CD4-positive, alpha-beta T cell (primary cell): ENCODE measurements at regions of chr10 and their contacts with region 1.

Region 1: GRCh38 chr10:100508691-100509150 is 10.9 kb downstream of the SEC31B start:
- DNase-seq: peak in 10 of 14 experiments; percentile 5 to 84 (median 39)
- ATAC-seq: peak; percentile 47
- H3K4me3 ChIP-seq: peak overlapping the region; percentile 2
- H3K4me3 Mint-ChIP-seq: peak overlapping the region; percentile 61
- H3K27ac ChIP-seq: peak overlapping the region in 1 of 2 donors; percentile 36
- H3K27ac Mint-ChIP-seq: peak overlapping the region; percentile 85
- H3K4me1 ChIP-seq: peaks cover 48% of the 10 kb centered on the region
- H3K4me1 Mint-ChIP-seq: peaks cover 53% of the 10 kb centered on the region
- H3K27me3 ChIP-seq: no peaks in the 10 kb centered on the region
- H3K27me3 Mint-ChIP-seq: no peaks in the 10 kb centered on the region
- CTCF ChIP-seq: peak; percentile 64

Region 2: GRCh38 chr10:99845837-99846382 is 662.8 kb before region 1 on chr10:
- CTCF ChIA-PET with region 1: no interaction called
- POLR2A ChIA-PET with region 1: no interaction called
- intact Hi-C with region 1: loop called in 1 of 2 experiments (anchors 10 kb)
- DNase-seq: peak; percentile 41 to 88 (median 58)
- ATAC-seq: peak; percentile 81
- H3K4me3 ChIP-seq: peak overlapping the region; percentile 13
- H3K4me3 Mint-ChIP-seq: no peak overlapping the region
- H3K27ac ChIP-seq: no peak overlapping the region
- H3K27ac Mint-ChIP-seq: no peak overlapping the region
- H3K4me1 ChIP-seq: peaks cover 6% of the 10 kb centered on the region
- H3K4me1 Mint-ChIP-seq: peaks cover 5% of the 10 kb centered on the region
- H3K27me3 ChIP-seq: peaks cover 0 to 8% of the 10 kb centered on the region in 2 experiments
- H3K27me3 Mint-ChIP-seq: no peaks in the 10 kb centered on the region
- CTCF ChIP-seq: peak; percentile 92

Region 3: DNA sequence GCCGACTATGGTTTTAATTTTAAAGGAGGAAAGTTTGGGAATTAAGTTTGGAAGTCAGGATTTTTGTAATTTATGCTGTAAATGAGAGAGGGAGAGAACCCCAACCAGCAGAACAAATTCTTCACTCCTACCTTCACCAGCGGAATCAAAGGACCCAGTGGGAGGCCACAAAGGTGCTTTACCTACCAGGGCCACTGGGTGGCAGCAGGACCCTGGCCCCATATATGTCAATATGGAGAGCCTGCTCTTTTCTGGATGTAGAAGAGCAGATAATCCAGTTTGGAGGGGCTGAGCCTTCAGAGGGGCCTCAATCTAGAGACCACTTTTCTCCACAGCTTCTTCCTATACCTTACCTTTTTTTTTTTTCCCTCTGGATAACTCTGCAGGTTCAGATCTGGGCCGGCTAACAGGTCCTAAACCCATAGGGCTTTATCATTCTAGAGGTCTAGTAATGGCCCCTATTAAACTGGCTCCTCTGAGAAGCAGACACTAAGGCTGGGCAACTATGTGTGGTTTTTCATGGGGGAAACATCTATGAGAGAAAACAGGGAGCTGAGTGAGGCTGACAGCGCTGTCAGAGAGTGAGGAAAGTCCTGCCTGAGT is 170.2 kb before region 1 on chr10:
- CTCF ChIA-PET with region 1: interaction called, 5 read pairs
- POLR2A ChIA-PET with region 1: interaction called, 3 read pairs
- intact Hi-C with region 1: loop called (anchors 1 to 2 kb)
- DNase-seq: peak; percentile 66 to 85 (median 76)
- ATAC-seq: peak; percentile 94
- H3K4me3 ChIP-seq: no peak overlapping the region
- H3K4me3 Mint-ChIP-seq: no peak overlapping the region
- H3K27ac ChIP-seq: no peak overlapping the region
- H3K27ac Mint-ChIP-seq: no peak overlapping the region
- H3K4me1 ChIP-seq: no peaks in the 10 kb centered on the region
- H3K4me1 Mint-ChIP-seq: no peaks in the 10 kb centered on the region
- H3K27me3 ChIP-seq: no peaks in the 10 kb centered on the region
- H3K27me3 Mint-ChIP-seq: peaks cover 4% of the 10 kb centered on the region
- CTCF ChIP-seq: peak; percentile 87

Region 4: DNA sequence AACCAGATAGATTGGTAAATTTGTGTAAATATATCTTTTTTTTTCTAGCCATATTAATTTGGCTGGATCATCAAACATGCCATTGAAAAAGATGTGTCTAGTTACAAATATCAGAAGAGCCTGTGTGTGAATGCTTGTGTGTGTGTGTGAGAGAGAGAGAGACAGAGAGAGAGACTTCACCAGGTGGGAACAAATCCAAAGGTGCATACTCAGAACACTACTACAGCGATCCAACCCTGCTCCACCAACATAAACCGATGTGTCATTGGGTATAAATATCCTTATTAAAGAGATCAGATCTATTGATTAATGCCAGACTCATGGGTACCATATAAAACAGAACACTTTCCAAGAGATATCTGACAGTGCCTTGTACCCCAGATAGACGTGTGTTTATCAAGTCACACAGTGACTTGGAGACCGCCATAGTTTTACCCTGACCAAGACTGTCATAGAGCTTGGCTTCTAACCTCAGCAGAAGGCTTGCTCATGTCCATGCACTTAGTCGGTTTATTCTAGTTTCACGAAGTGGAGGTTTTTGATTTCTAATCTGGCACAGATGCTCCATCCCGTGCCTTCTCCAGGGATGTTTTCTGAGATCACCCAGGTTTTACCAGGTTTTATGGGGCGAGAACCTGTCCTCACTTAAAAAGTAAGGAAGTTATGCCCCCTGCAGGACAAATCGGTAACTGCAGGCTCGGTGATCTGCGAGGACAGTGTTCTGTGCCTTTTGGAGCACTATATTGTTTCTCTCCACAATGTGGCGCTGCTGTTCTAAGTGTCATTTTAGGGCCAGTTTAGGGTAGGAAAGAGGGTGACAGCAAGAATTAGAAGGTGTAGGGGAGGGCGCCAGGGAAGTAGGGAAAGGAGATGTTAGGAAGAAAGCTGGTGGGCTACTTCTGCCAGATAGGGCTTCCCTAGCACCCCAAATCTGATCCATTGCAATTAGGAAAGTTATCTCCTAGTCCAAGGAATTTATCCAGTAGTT is 75.2 kb before region 1 on chr10:
- CTCF ChIA-PET with region 1: interaction called, 15 read pairs
- POLR2A ChIA-PET with region 1: no interaction called
- intact Hi-C with region 1: loop called (anchors 1 to 2 kb)
- DNase-seq: peak; percentile 88 to 99 (median 94)
- ATAC-seq: peak; percentile 99
- H3K4me3 ChIP-seq: no peak overlapping the region
- H3K4me3 Mint-ChIP-seq: no peak overlapping the region
- H3K27ac ChIP-seq: no peak overlapping the region
- H3K27ac Mint-ChIP-seq: no peak overlapping the region
- H3K4me1 ChIP-seq: peaks cover 5% of the 10 kb centered on the region
- H3K4me1 Mint-ChIP-seq: no peaks in the 10 kb centered on the region
- H3K27me3 ChIP-seq: no peaks in the 10 kb centered on the region
- H3K27me3 Mint-ChIP-seq: peaks cover 5% of the 10 kb centered on the region
- CTCF ChIP-seq: peak; percentile 100

Region 5: DNA sequence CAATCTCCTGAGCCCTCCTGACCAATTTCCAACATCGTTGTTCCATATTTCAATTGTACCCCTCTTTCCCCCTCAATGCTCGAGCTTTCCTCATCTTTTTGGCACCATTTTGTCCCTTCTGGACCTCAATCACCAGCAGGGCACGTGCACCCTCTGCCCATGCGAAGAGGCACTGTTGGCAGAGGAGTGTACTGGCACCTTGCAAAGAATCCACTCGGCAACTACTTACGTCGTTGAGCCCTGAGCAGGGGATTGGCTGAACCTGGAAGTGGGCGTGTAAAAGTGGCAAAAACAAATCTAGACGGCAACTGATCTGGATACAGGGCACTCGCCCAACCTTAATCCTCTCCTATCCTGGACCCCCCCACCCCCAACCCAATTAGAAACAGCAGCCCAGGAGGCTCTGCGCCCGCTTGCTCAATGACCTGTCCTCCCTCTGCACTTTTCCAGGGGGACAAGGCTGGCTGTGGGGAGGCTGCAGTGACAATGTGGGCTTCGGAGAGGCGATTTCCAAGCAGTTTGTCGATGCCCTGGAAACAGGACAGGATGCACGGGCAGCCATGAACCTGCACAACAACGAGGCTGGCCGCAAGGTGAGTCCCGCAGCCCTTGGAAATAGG is 27.1 kb before region 1 on chr10:
- CTCF ChIA-PET with region 1: interaction called, 67 read pairs
- POLR2A ChIA-PET with region 1: interaction called, 14 read pairs
- intact Hi-C with region 1: loop called (anchors 1 to 2 kb)
- DNase-seq: peak; percentile 79 to 98 (median 92)
- ATAC-seq: peak; percentile 96
- H3K4me3 ChIP-seq: peak overlapping the region; percentile 69
- H3K4me3 Mint-ChIP-seq: peak overlapping the region; percentile 80
- H3K27ac ChIP-seq: no peak overlapping the region
- H3K27ac Mint-ChIP-seq: no peak overlapping the region
- H3K4me1 ChIP-seq: peaks cover 17% of the 10 kb centered on the region
- H3K4me1 Mint-ChIP-seq: peaks cover 13% of the 10 kb centered on the region
- H3K27me3 ChIP-seq: peaks cover 17 to 22% of the 10 kb centered on the region in 2 experiments
- H3K27me3 Mint-ChIP-seq: peaks cover 32% of the 10 kb centered on the region
- CTCF ChIP-seq: no peak

Region 6: GRCh38 chr10:100518761-100519241 is 10.1 kb after region 1 on chr10:
- CTCF ChIA-PET with region 1: interaction called, 32 read pairs
- POLR2A ChIA-PET with region 1: interaction called, 25 read pairs
- intact Hi-C with region 1: loop called in 1 of 2 experiments (anchors 1 kb)
- DNase-seq: peak; percentile 38 to 76 (median 52)
- ATAC-seq: peak; percentile 80
- H3K4me3 ChIP-seq: no peak overlapping the region
- H3K4me3 Mint-ChIP-seq: no peak overlapping the region
- H3K27ac ChIP-seq: no peak overlapping the region
- H3K27ac Mint-ChIP-seq: peak overlapping the region; percentile 29
- H3K4me1 ChIP-seq: peaks cover 12% of the 10 kb centered on the region
- H3K4me1 Mint-ChIP-seq: peaks cover 16% of the 10 kb centered on the region
- H3K27me3 ChIP-seq: no peaks in the 10 kb centered on the region
- H3K27me3 Mint-ChIP-seq: no peaks in the 10 kb centered on the region
- CTCF ChIP-seq: peak; percentile 88

Region 7: GRCh38 chr10:100535715-100536353 is 27.1 kb after region 1 on chr10 and contains the start of gene HIF1AN:
- CTCF ChIA-PET with region 1: interaction called, 19 read pairs
- POLR2A ChIA-PET with region 1: interaction called, 25 read pairs
- intact Hi-C with region 1: loop called in 1 of 2 experiments (anchors 2 kb)
- DNase-seq: peak; percentile 75 to 97 (median 85)
- ATAC-seq: peak; percentile 99
- H3K4me3 ChIP-seq: peak within 1 kb of the TSS; percentile 77
- H3K4me3 Mint-ChIP-seq: peak within 1 kb of the TSS; percentile 31
- H3K27ac ChIP-seq: peak within 1 kb of the TSS; percentile 59 to 67
- H3K27ac Mint-ChIP-seq: peak within 1 kb of the TSS; percentile 27
- H3K4me1 ChIP-seq: peaks cover 20% of the 10 kb centered on the region
- H3K4me1 Mint-ChIP-seq: peaks cover 9% of the 10 kb centered on the region
- H3K27me3 ChIP-seq: no peaks in the 10 kb centered on the region
- H3K27me3 Mint-ChIP-seq: no peaks in the 10 kb centered on the region
- CTCF ChIP-seq: peak; percentile 88
- total RNA-seq, gene HIF1AN: 29.7 to 30.5 TPM

Region 8: DNA sequence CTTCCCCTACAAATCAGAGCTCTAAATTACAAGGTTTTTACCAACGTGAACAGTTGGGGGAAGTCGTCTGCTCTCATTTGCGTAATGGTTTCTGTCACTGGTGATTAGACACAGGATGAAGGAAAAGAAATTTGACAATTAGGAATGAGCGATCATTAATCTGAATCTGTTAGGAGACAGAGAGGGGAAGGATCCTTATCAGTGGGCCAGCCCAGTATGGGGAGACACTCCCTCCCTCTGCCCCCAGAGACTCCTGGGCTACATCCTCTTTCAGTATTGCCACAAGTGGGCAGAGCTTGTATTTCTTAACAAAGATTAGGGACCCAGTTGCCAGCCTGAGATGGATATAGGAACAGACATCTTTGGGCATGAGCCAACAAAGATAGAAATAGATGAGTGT is 42.5 kb after region 1 on chr10:
- CTCF ChIA-PET with region 1: no interaction called
- POLR2A ChIA-PET with region 1: no interaction called
- intact Hi-C with region 1: no loop called
- DNase-seq: no peak
- ATAC-seq: no peak
- H3K4me3 ChIP-seq: no peak overlapping the region
- H3K4me3 Mint-ChIP-seq: no peak overlapping the region
- H3K27ac ChIP-seq: no peak overlapping the region
- H3K27ac Mint-ChIP-seq: no peak overlapping the region
- H3K4me1 ChIP-seq: no peaks in the 10 kb centered on the region
- H3K4me1 Mint-ChIP-seq: no peaks in the 10 kb centered on the region
- H3K27me3 ChIP-seq: no peaks in the 10 kb centered on the region
- H3K27me3 Mint-ChIP-seq: no peaks in the 10 kb centered on the region
- CTCF ChIP-seq: no peak

Region 9: GRCh38 chr10:100705139-100705538 is 196.4 kb after region 1 on chr10:
- CTCF ChIA-PET with region 1: no interaction called
- POLR2A ChIA-PET with region 1: no interaction called
- intact Hi-C with region 1: no loop called
- DNase-seq: no peak
- ATAC-seq: no peak
- H3K4me3 ChIP-seq: no peak overlapping the region
- H3K4me3 Mint-ChIP-seq: no peak overlapping the region
- H3K27ac ChIP-seq: no peak overlapping the region
- H3K27ac Mint-ChIP-seq: no peak overlapping the region
- H3K4me1 ChIP-seq: no peaks in the 10 kb centered on the region
- H3K4me1 Mint-ChIP-seq: no peaks in the 10 kb centered on the region
- H3K27me3 ChIP-seq: peaks cover 25 to 52% of the 10 kb centered on the region in 2 experiments
- H3K27me3 Mint-ChIP-seq: peaks cover 52% of the 10 kb centered on the region
- CTCF ChIP-seq: no peak

Region 10: GRCh38 chr10:100878291-100878910 is 369.7 kb after region 1 on chr10:
- CTCF ChIA-PET with region 1: no interaction called
- POLR2A ChIA-PET with region 1: no interaction called
- intact Hi-C with region 1: no loop called
- DNase-seq: peak in 5 of 14 experiments; percentile 4 to 45 (median 29)
- ATAC-seq: peak; percentile 73
- H3K4me3 ChIP-seq: no peak overlapping the region
- H3K4me3 Mint-ChIP-seq: no peak overlapping the region
- H3K27ac ChIP-seq: no peak overlapping the region
- H3K27ac Mint-ChIP-seq: no peak overlapping the region
- H3K4me1 ChIP-seq: no peaks in the 10 kb centered on the region
- H3K4me1 Mint-ChIP-seq: no peaks in the 10 kb centered on the region
- H3K27me3 ChIP-seq: peaks cover 0 to 2% of the 10 kb centered on the region in 2 experiments
- H3K27me3 Mint-ChIP-seq: peaks cover 11% of the 10 kb centered on the region
- CTCF ChIP-seq: no peak